ENCODE measurements at regions of chr9 and their contacts with region 1.

Region 1: GRCh38 chr9:75027187-75028107 is 646 bp downstream of the CARNMT1 start:
- H3K4me3 Mint-ChIP-seq: peak overlapping the region; percentile 96
- H3K27ac Mint-ChIP-seq: peak overlapping the region; percentile 85
- H3K4me1 Mint-ChIP-seq: peaks cover 18% of the 10 kb centered on the region
- H3K27me3 Mint-ChIP-seq: no peaks in the 10 kb centered on the region

Region 2: DNA sequence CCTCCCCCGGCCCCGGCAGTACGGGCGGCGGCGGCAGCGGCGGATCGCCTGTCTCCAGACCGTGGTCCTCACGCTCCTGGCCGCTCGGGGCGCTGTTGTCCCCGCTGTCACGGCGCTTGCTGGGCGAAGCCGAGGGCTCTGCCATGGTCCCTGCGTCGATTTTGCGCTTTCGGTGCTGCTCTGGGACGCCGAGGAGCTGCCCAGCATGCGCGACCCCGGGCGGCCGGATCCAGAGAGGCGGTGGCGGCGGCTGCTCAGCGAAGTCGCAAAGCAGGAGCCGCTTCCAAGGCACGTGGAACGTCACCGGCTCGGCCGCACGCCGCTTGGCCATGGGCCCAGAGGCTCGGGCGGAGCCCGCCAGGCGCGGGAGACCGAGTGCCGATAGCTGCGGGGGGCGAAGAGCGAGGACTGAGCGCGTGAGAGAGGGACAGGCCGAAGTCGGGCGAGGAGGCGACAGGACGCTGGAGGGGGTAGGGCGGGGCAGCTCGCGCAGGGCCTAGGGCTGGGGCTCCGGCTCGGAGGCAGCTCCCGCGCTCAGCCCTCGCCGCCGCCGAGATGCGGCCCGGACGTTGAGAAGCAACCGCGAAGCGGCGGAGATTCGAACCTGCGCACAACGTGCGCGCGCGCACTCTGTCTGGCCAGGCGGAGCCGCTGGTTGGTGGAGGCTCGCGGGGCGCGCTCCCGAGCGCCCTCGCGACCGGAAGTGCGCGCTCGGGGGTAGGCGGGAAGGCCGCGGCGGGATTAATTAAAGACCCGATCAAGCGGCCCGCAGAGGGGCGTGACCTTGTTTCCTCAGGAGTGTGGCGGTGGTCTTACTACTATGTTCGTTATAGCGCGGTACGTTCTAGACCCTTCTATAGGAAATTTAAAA is 74.9 kb before region 1 on chr9 and contains the start of gene C9orf40:
- intact Hi-C with region 1: loop called (anchors 1 kb)
- H3K4me3 Mint-ChIP-seq: peak within 1 kb of the TSS; percentile 94
- H3K27ac Mint-ChIP-seq: peak within 1 kb of the TSS; percentile 98
- H3K4me1 Mint-ChIP-seq: peaks cover 8% of the 10 kb centered on the region
- H3K27me3 Mint-ChIP-seq: peaks cover 4% of the 10 kb centered on the region

Region 3: GRCh38 chr9:75081632-75082031 is 54.2 kb after region 1 on chr9:
- intact Hi-C with region 1: no loop called
- H3K4me3 Mint-ChIP-seq: no peak overlapping the region
- H3K27ac Mint-ChIP-seq: peak overlapping the region; percentile 2
- H3K4me1 Mint-ChIP-seq: peaks cover 28% of the 10 kb centered on the region
- H3K27me3 Mint-ChIP-seq: no peaks in the 10 kb centered on the region

Region 4: DNA sequence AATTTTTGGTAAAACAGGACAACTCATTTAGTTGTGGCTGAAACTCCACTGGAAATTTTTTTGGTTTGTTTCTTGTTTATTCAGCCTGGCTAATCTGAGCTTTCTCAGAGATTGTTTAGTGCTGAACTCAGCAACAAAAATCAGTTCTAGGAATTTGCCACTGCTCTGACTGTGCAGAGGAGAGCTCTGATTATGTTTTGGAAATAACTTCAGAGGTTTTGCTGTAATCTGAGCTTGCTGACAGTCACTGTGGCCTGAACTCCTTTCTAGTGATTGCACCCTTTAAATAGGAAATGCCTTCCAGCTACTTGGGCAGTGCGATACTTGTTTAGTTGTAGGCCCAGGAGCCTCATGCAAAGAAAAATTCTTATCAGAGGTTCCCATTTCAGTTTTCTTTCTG is 121.1 kb after region 1 on chr9:
- intact Hi-C with region 1: loop called (anchors 5 kb)
- H3K4me3 Mint-ChIP-seq: no peak overlapping the region
- H3K27ac Mint-ChIP-seq: peak overlapping the region; percentile 90
- H3K4me1 Mint-ChIP-seq: peaks cover 41% of the 10 kb centered on the region
- H3K27me3 Mint-ChIP-seq: no peaks in the 10 kb centered on the region

Measured in dendritic cell treated with granulocyte-macrophage colony-stimulating factor and Interleukin-4, amounts not matched to agents 40 ng/mL and 50 ng/mL, for 4 days (primary cell).